ENCODE measurements at regions of chr5 and their contacts with region 1.

Region 1: GRCh38 chr5:95631991-95632675 is 12.2 kb downstream of the GPR150 start:
- DNase-seq: peak; percentile 37 to 80 (median 62)
- ATAC-seq: peak; percentile 99 to 100 (median 100)
- H3K4me3 ChIP-seq: no peak overlapping the region
- H3K4me3 Mint-ChIP-seq: peak overlapping the region in 2 of 3 donors; percentile 46 to 48
- H3K27ac ChIP-seq: peak overlapping the region; percentile 77
- H3K27ac Mint-ChIP-seq: peak overlapping the region; percentile 90 to 98
- H3K4me1 ChIP-seq: peaks cover 7 to 11% of the 10 kb centered on the region in 2 experiments
- H3K4me1 Mint-ChIP-seq: peaks cover 24 to 31% (median 26%) of the 10 kb centered on the region in 3 donors
- H3K27me3 ChIP-seq: peaks cover 0 to 2% of the 10 kb centered on the region in 2 experiments
- H3K27me3 Mint-ChIP-seq: no peaks in the 10 kb centered on the region

Region 2: DNA sequence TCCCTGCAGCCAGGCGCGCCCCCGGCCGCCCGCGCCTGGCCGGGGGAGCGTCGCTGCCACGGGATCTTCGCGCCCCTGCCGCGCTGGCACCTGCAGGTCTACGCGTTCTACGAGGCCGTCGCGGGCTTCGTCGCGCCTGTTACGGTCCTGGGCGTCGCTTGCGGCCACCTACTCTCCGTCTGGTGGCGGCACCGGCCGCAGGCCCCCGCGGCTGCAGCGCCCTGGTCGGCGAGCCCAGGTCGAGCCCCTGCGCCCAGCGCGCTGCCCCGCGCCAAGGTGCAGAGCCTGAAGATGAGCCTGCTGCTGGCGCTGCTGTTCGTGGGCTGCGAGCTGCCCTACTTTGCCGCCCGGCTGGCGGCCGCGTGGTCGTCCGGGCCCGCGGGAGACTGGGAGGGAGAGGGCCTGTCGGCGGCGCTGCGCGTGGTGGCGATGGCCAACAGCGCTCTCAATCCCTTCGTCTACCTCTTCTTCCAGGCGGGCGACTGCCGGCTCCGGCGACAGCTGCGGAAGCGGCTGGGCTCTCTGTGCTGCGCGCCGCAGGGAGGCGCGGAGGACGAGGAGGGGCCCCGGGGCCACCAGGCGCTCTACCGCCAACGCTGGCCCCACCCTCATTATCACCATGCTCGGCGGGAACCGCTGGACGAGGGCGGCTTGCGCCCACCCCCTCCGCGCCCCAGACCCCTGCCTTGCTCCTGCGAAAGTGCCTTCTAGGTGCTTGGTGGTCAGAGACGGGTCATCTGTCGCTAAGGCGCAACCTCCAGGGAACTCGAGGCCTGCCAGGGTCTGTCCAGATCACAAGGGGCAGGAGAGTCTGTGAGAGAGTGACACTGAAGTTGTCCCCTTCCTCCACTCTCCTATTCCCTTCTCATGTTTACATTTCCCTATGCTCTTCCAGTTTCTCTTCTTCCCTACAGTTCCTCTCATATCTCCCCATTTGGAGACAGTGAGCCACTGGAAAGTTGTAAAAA is 11.0 kb before region 1 on chr5:
- CTCF ChIA-PET with region 1: interaction called, 4 to 26 read pairs
- POLR2A ChIA-PET with region 1: interaction called, 10 to 17 read pairs
- DNase-seq: peak in 31 of 35 experiments; percentile 2 to 59 (median 24)
- ATAC-seq: peak; percentile 54 to 63 (median 58)
- H3K4me3 ChIP-seq: peak overlapping the region; percentile 40 to 66
- H3K4me3 Mint-ChIP-seq: peak overlapping the region; percentile 80 to 84 (median 83)
- H3K27ac ChIP-seq: peak overlapping the region; percentile 57
- H3K27ac Mint-ChIP-seq: peak overlapping the region; percentile 85 to 93
- H3K4me1 ChIP-seq: peaks cover 38 to 41% of the 10 kb centered on the region in 2 experiments
- H3K4me1 Mint-ChIP-seq: peaks cover 56 to 73% (median 70%) of the 10 kb centered on the region in 3 donors
- H3K27me3 ChIP-seq: peaks cover 0 to 5% of the 10 kb centered on the region in 2 experiments
- H3K27me3 Mint-ChIP-seq: no peaks in the 10 kb centered on the region

Measured in T-cell (primary cell).